Activated CD8-positive, alpha-beta T cell treated with anti-CD3 and anti-CD28 coated beads for 36 hours (primary cell): ENCODE measurements at regions of chr4 and their contacts with region 1.

Region 1: GRCh38 chr4:184263910-184264732 is 46.4 kb upstream of the ENPP6 start:
- DNase-seq: peak; percentile 100
- ATAC-seq: peak; percentile 47
- H3K4me3 Mint-ChIP-seq: peak overlapping the region; percentile 3
- H3K27ac Mint-ChIP-seq: peak overlapping the region; percentile 61
- H3K4me1 Mint-ChIP-seq: peaks cover 51% of the 10 kb centered on the region
- H3K27me3 Mint-ChIP-seq: no peaks in the 10 kb centered on the region
- CTCF ChIP-seq: peak; percentile 90

Region 2: DNA sequence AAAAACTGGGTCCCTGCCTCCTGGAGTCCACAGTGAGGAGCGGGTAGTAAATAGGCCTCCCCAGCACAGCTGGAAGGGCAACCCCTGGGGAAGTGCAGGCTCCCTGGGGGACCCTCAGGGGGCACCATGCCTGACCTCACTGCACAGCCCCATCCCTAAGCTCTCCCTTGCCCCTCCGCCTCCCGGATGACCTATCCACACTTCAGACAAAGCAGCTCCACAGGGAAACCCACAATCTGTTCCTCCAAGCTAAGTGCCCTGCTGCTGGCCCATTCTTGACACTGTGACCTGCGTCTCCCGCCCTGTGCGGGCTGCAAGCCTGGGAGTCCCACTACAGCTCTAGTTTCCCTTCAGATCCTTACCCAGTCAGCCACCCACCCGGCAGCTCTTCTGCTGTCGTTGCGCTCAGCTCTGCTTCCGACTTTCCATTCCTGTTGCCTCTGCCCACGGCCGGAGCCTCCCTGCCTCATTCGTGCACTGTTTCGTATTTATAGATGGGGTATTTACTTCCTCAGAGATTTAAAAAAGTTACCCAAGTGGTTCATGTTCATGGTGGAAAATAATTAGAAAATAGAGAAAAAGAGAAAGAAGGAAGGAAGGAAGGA is 406.0 kb before region 1 on chr4:
- CTCF ChIA-PET with region 1: no interaction called
- POLR2A ChIA-PET with region 1: no interaction called
- intact Hi-C with region 1: no loop called
- DNase-seq: no peak
- ATAC-seq: no peak
- H3K4me3 Mint-ChIP-seq: no peak overlapping the region
- H3K27ac Mint-ChIP-seq: no peak overlapping the region
- H3K4me1 Mint-ChIP-seq: no peaks in the 10 kb centered on the region
- H3K27me3 Mint-ChIP-seq: peaks cover 10% of the 10 kb centered on the region
- CTCF ChIP-seq: no peak

Region 3: GRCh38 chr4:184205243-184205642 is 58.9 kb before region 1 on chr4:
- CTCF ChIA-PET with region 1: no interaction called
- POLR2A ChIA-PET with region 1: no interaction called
- intact Hi-C with region 1: no loop called
- DNase-seq: no peak
- ATAC-seq: no peak
- H3K4me3 Mint-ChIP-seq: no peak overlapping the region
- H3K27ac Mint-ChIP-seq: no peak overlapping the region
- H3K4me1 Mint-ChIP-seq: no peaks in the 10 kb centered on the region
- H3K27me3 Mint-ChIP-seq: peaks cover 10% of the 10 kb centered on the region
- CTCF ChIP-seq: no peak

Region 4: GRCh38 chr4:184250795-184251669 is 13.1 kb before region 1 on chr4:
- CTCF ChIA-PET with region 1: interaction called, 63 read pairs
- POLR2A ChIA-PET with region 1: interaction called, 4 read pairs
- intact Hi-C with region 1: no loop called
- DNase-seq: peak; percentile 37
- ATAC-seq: peak; percentile 67
- H3K4me3 Mint-ChIP-seq: no peak overlapping the region
- H3K27ac Mint-ChIP-seq: peak overlapping the region; percentile 87
- H3K4me1 Mint-ChIP-seq: peaks cover 20% of the 10 kb centered on the region
- H3K27me3 Mint-ChIP-seq: peaks cover 4% of the 10 kb centered on the region
- CTCF ChIP-seq: peak; percentile 78

Region 5: GRCh38 chr4:184310171-184310567 is 46.0 kb after region 1 on chr4:
- CTCF ChIA-PET with region 1: interaction called, 18 read pairs
- POLR2A ChIA-PET with region 1: interaction called, 4 read pairs
- intact Hi-C with region 1: loop called (anchors 10 kb)
- DNase-seq: peak; percentile 72
- ATAC-seq: peak; percentile 51
- H3K4me3 Mint-ChIP-seq: peak overlapping the region; percentile 18
- H3K27ac Mint-ChIP-seq: peak overlapping the region; percentile 88
- H3K4me1 Mint-ChIP-seq: peaks cover 68% of the 10 kb centered on the region
- H3K27me3 Mint-ChIP-seq: no peaks in the 10 kb centered on the region
- CTCF ChIP-seq: peak; percentile 60

Region 6: GRCh38 chr4:184384056-184384809 is 120.1 kb after region 1 on chr4:
- CTCF ChIA-PET with region 1: interaction called, 23 read pairs
- POLR2A ChIA-PET with region 1: interaction called, 3 read pairs
- intact Hi-C with region 1: no loop called
- DNase-seq: peak; percentile 48
- ATAC-seq: peak; percentile 52
- H3K4me3 Mint-ChIP-seq: peak overlapping the region; percentile 22
- H3K27ac Mint-ChIP-seq: peak overlapping the region; percentile 63
- H3K4me1 Mint-ChIP-seq: peaks cover 57% of the 10 kb centered on the region
- H3K27me3 Mint-ChIP-seq: no peaks in the 10 kb centered on the region
- CTCF ChIP-seq: no peak

Region 7: DNA sequence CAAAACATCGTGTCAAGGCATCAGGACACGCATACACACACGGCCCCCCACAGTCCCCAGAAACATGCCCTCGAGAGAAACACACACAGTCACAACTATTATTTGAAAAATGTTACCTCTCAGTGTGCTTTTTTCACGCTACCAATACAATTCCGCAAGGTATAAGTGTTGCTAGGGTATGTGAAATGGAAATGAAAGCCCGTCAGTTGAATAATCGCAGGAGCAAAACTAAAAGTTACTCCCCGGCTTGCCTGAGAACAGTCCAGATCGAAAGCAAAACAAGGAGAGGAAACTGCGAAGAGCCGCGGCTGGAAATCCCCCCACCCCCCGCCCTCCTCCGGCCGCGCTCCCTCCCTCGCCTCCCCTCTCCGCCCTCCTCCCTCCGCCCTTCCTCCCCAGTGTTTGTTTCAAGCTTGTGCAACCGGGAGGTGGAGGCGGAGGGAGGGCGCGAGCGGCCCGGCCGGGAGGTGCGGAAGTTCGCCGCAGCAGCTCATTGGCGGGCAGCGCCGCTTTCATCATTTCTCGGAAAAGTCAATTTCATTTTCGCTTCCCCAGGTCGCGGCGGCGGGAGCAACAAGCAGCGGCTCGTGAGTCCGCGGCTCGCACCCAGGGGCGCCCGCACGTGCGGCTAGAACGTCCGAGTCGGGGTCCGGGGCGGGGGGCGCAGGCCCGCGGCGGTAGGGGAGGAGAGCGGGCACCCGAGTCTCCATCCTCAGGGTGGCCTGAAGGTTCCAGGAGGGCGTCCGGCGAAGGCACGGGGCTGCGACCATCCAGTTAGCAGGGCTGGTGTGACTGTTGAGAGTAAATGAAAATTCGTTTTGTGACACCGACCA is 210.4 kb after region 1 on chr4 and contains the start of gene IRF2:
- CTCF ChIA-PET with region 1: interaction called, 14 read pairs
- POLR2A ChIA-PET with region 1: interaction called, 17 read pairs
- intact Hi-C with region 1: loop called (anchors 5 kb)
- DNase-seq: peak; percentile 98
- ATAC-seq: peak; percentile 83
- H3K4me3 Mint-ChIP-seq: peak within 1 kb of the TSS; percentile 94
- H3K27ac Mint-ChIP-seq: peak within 1 kb of the TSS; percentile 98
- H3K4me1 Mint-ChIP-seq: peaks cover 50% of the 10 kb centered on the region
- H3K27me3 Mint-ChIP-seq: no peaks in the 10 kb centered on the region
- CTCF ChIP-seq: no peak
- total RNA-seq, gene IRF2: 48.1 to 56.4 TPM

Region 8: DNA sequence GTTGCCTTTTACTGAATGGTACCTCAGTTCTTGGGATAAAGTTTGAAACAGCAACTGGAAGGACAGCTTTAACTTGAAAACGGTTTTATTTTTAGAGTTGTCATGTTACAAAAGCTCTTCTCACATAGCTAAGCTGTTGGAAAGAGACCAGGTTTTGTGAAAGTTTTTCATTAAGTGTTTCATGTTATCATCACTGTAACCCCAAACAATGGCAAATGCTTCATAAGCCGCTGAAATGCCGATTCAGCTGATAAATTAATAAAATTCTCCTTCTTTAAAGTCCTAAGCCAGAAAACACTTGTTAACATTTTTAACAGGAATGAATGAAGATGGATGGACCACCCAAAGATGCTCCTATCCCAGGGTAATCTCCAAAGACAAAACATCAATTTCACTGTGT is 286.4 kb after region 1 on chr4:
- CTCF ChIA-PET with region 1: interaction called, 13 read pairs
- POLR2A ChIA-PET with region 1: no interaction called
- intact Hi-C with region 1: no loop called
- DNase-seq: no peak
- ATAC-seq: no peak
- H3K4me3 Mint-ChIP-seq: no peak overlapping the region
- H3K27ac Mint-ChIP-seq: no peak overlapping the region
- H3K4me1 Mint-ChIP-seq: peaks cover 15% of the 10 kb centered on the region
- H3K27me3 Mint-ChIP-seq: peaks cover 1% of the 10 kb centered on the region
- CTCF ChIP-seq: no peak